ENCODE measurements at regions of chr11 and their contacts with region 1.

Region 1: GRCh38 chr11:95067039-95067840 is 521 bp downstream of the SRSF8 start:
- DNase-seq: peak; percentile 88
- ATAC-seq: peak; percentile 78
- H3K4me3 ChIP-seq: peak overlapping the region; percentile 70 to 95 (median 93)
- H3K4me3 Mint-ChIP-seq: peak overlapping the region; percentile 100
- H3K27ac ChIP-seq: peak overlapping the region; percentile 78 to 87
- H3K27ac Mint-ChIP-seq: peak overlapping the region; percentile 100
- H3K4me1 ChIP-seq: peaks cover 14 to 22% of the 10 kb centered on the region in 2 donors
- H3K4me1 Mint-ChIP-seq: peaks cover 26% of the 10 kb centered on the region
- H3K27me3 ChIP-seq: no peaks in the 10 kb centered on the region
- H3K27me3 Mint-ChIP-seq: no peaks in the 10 kb centered on the region
- CTCF ChIP-seq: peak; percentile 52

Region 2: GRCh38 chr11:93197380-93198214 is 1869.6 kb before region 1 on chr11 and contains the start of gene SLC36A4:
- CTCF ChIA-PET with region 1: no interaction called
- POLR2A ChIA-PET with region 1: no interaction called
- intact Hi-C with region 1: loop called (anchors 5 kb)
- DNase-seq: peak; percentile 94
- ATAC-seq: peak; percentile 85
- H3K4me3 ChIP-seq: peak within 1 kb of the TSS; percentile 67 to 99 (median 77)
- H3K4me3 Mint-ChIP-seq: peak within 1 kb of the TSS; percentile 96
- H3K27ac ChIP-seq: peak within 1 kb of the TSS; percentile 90 to 97
- H3K27ac Mint-ChIP-seq: peak within 1 kb of the TSS; percentile 96
- H3K4me1 ChIP-seq: peaks cover 7% of the 10 kb centered on the region in 2 donors
- H3K4me1 Mint-ChIP-seq: peaks cover 18% of the 10 kb centered on the region
- H3K27me3 ChIP-seq: peaks cover 0 to 7% (median 0%) of the 10 kb centered on the region in 4 experiments
- H3K27me3 Mint-ChIP-seq: peaks cover 10% of the 10 kb centered on the region
- CTCF ChIP-seq: no peak
- total RNA-seq, gene SLC36A4: 27.5 and 28.2 TPM in 2 replicates

Region 3: GRCh38 chr11:95055283-95055897 is 11.8 kb before region 1 on chr11:
- CTCF ChIA-PET with region 1: interaction called, 15 read pairs
- POLR2A ChIA-PET with region 1: no interaction called
- intact Hi-C with region 1: no loop called
- DNase-seq: peak; percentile 14
- ATAC-seq: no peak
- H3K4me3 ChIP-seq: no peak overlapping the region
- H3K4me3 Mint-ChIP-seq: no peak overlapping the region
- H3K27ac ChIP-seq: no peak overlapping the region
- H3K27ac Mint-ChIP-seq: no peak overlapping the region
- H3K4me1 ChIP-seq: peaks cover 3 to 7% of the 10 kb centered on the region in 2 donors
- H3K4me1 Mint-ChIP-seq: peaks cover 13% of the 10 kb centered on the region
- H3K27me3 ChIP-seq: no peaks in the 10 kb centered on the region
- H3K27me3 Mint-ChIP-seq: peaks cover 7% of the 10 kb centered on the region
- CTCF ChIP-seq: no peak

Region 4: GRCh38 chr11:95089620-95090542 is 22.6 kb after region 1 on chr11 and contains the start of gene ENDOD1:
- CTCF ChIA-PET with region 1: interaction called, 96 read pairs
- POLR2A ChIA-PET with region 1: interaction called, 46 read pairs
- intact Hi-C with region 1: loop called (anchors 1 kb)
- DNase-seq: peak; percentile 93
- ATAC-seq: peak; percentile 94
- H3K4me3 ChIP-seq: peak within 1 kb of the TSS; percentile 13 to 82 (median 79)
- H3K4me3 Mint-ChIP-seq: peak within 1 kb of the TSS; percentile 94
- H3K27ac ChIP-seq: peak within 1 kb of the TSS; percentile 79 to 94
- H3K27ac Mint-ChIP-seq: peak within 1 kb of the TSS; percentile 98
- H3K4me1 ChIP-seq: peaks cover 50 to 52% of the 10 kb centered on the region in 2 donors
- H3K4me1 Mint-ChIP-seq: peaks cover 59% of the 10 kb centered on the region
- H3K27me3 ChIP-seq: no peaks in the 10 kb centered on the region
- H3K27me3 Mint-ChIP-seq: no peaks in the 10 kb centered on the region
- CTCF ChIP-seq: no peak
- total RNA-seq, gene ENDOD1: 11.7 and 12.0 TPM in 2 replicates

Region 5: DNA sequence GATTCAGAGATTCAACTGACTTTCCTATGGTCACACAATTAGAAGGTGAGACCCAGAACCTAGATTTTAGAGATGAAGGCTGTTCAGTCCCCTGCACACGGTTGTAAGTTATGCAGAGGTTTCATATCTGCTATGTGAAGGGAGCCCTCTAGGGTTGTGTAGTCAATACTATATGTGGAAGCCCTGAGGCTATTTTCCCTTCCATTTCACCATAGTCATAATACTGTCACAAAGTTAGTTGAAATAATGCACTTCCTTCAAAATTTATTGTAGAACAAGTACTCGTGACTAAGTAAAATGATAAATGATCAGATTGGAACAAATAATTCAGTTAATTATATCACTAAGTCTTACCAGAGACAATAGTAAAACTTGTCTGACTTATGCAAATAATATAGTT is 71.2 kb after region 1 on chr11:
- CTCF ChIA-PET with region 1: interaction called, 135 read pairs
- POLR2A ChIA-PET with region 1: interaction called, 6 read pairs
- intact Hi-C with region 1: loop called (anchors 1 kb)
- DNase-seq: peak; percentile 38
- ATAC-seq: peak; percentile 83
- H3K4me3 ChIP-seq: no peak overlapping the region
- H3K4me3 Mint-ChIP-seq: no peak overlapping the region
- H3K27ac ChIP-seq: no peak overlapping the region
- H3K27ac Mint-ChIP-seq: no peak overlapping the region
- H3K4me1 ChIP-seq: no peaks in the 10 kb centered on the region
- H3K4me1 Mint-ChIP-seq: no peaks in the 10 kb centered on the region
- H3K27me3 ChIP-seq: no peaks in the 10 kb centered on the region
- H3K27me3 Mint-ChIP-seq: no peaks in the 10 kb centered on the region
- CTCF ChIP-seq: peak; percentile 57

Region 6: GRCh38 chr11:95790123-95790932 is 723.1 kb after region 1 on chr11 and contains the start of gene CEP57:
- CTCF ChIA-PET with region 1: interaction called, 6 read pairs
- POLR2A ChIA-PET with region 1: interaction called, 21 read pairs
- intact Hi-C with region 1: loop called (anchors 1 kb)
- DNase-seq: peak; percentile 98
- ATAC-seq: peak; percentile 63
- H3K4me3 ChIP-seq: peak within 1 kb of the TSS; percentile 73 to 99 (median 96)
- H3K4me3 Mint-ChIP-seq: peak within 1 kb of the TSS; percentile 97
- H3K27ac ChIP-seq: peak within 1 kb of the TSS; percentile 98 to 100
- H3K27ac Mint-ChIP-seq: peak within 1 kb of the TSS; percentile 99
- H3K4me1 ChIP-seq: peaks cover 20% of the 10 kb centered on the region in 2 donors
- H3K4me1 Mint-ChIP-seq: peaks cover 51% of the 10 kb centered on the region
- H3K27me3 ChIP-seq: no peaks in the 10 kb centered on the region
- H3K27me3 Mint-ChIP-seq: no peaks in the 10 kb centered on the region
- CTCF ChIP-seq: no peak
- total RNA-seq, gene CEP57: 78.1 and 82.9 TPM in 2 replicates